ENCODE measurements at regions of chr11 and their contacts with region 1.

Region 1: DNA sequence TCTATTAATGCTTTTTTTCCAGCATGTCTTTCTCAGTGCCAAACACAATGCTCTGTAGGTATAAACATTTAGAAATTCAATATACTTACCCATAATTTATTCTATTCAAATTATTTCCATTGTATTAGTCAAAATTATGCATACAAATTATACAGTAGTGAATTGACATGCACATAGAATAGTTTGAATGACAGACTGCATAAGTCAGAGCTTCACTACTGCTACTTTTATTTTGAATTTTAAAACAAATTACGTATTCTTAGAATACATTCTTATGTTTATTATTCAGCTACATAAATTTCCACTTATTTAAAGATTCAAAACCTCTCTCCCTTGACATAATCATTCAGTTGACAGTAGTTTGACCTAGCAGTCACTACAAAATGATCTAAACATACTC is 808.0 kb upstream of the CCDC179 start:
- DNase-seq: no peak

Region 2: GRCh38 chr11:22730319-22730718 is 938.0 kb before region 1 on chr11:
- intact Hi-C with region 1: no loop called
- DNase-seq: no peak

Region 3: GRCh38 chr11:23143022-23143421 is 525.3 kb before region 1 on chr11:
- intact Hi-C with region 1: no loop called
- DNase-seq: no peak

Region 4: DNA sequence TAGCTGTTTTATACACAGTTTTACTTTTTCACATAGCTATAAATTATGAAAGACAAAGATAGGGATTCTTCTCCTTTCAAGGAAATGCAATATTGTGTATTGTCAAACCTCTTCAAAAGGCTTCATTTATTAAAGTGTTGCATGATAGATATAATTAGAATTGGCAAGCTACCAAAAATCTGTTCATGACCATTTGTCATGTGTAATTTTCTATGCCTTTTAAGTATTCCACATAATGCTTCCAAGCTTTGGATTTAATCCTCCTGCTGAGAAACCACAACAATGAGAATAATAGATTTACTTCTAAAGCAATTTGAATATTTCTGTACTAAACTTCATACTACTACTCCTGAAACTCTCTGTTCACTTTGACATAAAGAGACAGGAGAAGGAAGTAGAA is 404.9 kb before region 1 on chr11:
- intact Hi-C with region 1: no loop called
- DNase-seq: no peak

Region 5: DNA sequence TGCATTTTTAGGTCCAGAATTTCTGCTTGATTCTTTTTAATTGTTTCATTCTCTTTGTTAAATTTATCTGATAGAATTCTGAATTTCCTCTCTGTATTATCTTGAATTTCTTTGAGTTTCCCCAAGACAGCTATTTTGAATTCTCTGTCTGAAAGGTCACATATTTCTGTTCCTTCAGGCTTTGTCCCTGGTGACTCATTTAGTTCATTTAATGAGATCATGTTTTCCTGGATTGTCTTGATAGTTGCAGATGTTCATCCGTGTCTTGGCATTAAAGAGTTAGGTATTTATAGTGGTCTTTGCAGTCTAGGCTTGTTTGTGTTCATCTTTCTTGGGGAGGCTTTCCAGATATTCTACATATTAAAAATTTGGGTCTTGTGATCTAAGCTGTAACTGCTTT is 113.2 kb before region 1 on chr11:
- intact Hi-C with region 1: no loop called
- DNase-seq: no peak

Region 6: GRCh38 chr11:23680488-23681230 is 12.3 kb after region 1 on chr11:
- intact Hi-C with region 1: loop called in 1 of 2 experiments (anchors 2 kb)
- DNase-seq: peak; percentile 52

Measured in posterior vena cava (tissue), 2 donors.